ENCODE measurements at regions of chr10 and their contacts with region 1.

Region 1: DNA sequence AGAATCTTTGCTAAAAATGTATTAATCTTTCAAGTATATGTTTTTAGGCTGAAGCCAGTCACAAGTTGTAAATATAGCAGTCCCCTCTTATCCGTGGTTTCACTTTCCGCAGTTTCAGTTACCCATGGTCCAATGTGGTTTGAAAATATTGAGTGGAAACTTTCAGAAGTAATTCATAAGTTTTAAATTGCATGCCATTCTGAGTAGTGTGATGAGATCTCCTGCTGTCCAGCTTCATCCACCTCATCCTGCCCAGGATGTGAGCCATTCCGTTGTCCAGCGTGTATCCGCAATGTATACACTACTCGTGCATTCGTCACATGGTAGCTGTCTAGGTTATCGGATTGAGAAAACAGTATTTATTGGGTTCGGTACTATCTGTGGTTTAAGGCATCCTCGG is 12.2 kb downstream of the PDCD4 start:
- DNase-seq: peak in 1 of 9 experiments; percentile 45
- ATAC-seq: peak; percentile 22
- H3K4me3 ChIP-seq: peak overlapping the region in 1 of 2 experiments; percentile 29
- H3K4me3 Mint-ChIP-seq: peak overlapping the region; percentile 74
- H3K27ac ChIP-seq: peak overlapping the region in 1 of 2 experiments; percentile 58
- H3K27ac Mint-ChIP-seq: peak overlapping the region; percentile 83
- H3K4me1 ChIP-seq: peaks cover 68% of the 10 kb centered on the region
- H3K4me1 Mint-ChIP-seq: peaks cover 76% of the 10 kb centered on the region
- H3K27me3 ChIP-seq: no peaks in the 10 kb centered on the region
- H3K27me3 Mint-ChIP-seq: no peaks in the 10 kb centered on the region
- CTCF ChIP-seq: no peak

Region 2: DNA sequence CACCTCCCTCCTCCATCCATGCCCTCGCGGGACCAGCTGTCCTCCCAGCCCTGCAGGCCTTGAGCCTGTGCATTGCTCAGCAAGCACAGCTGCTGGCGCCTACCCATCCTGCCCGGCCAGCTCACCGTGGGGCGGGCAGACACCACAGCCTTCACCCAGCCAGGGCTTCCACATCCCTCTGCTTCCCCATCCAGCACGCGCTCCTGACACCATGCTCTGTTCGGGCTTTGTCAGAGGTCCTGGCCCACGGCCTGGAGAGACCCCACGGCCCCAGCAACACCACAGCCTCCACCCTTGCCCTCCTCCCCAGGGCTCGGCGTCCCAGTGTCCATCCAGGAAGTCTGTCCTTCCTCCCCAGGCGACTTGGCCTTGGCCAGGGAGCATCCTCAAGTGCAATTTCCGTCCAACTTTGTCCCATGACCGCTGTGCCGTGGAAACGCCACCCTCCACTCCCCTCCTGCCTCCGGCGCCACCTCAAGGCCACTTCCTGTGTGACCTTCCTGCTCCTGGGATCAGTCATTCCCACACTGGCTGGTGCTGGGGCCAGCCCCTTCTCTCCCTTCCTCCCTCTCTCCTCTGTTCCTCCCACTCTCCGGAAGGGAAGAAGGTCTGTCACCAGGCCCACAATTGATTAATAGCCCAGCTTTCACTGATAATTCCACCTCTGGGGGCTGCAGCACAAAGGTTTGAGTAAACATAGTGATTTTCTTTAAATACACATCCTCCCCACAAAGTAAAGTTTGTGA is 507.7 kb before region 1 on chr10:
- CTCF ChIA-PET with region 1: no interaction called
- POLR2A ChIA-PET with region 1: no interaction called
- intact Hi-C with region 1: no loop called
- DNase-seq: no peak
- ATAC-seq: no peak
- H3K4me3 ChIP-seq: no peak overlapping the region
- H3K4me3 Mint-ChIP-seq: no peak overlapping the region
- H3K27ac ChIP-seq: no peak overlapping the region
- H3K27ac Mint-ChIP-seq: no peak overlapping the region
- H3K4me1 ChIP-seq: no peaks in the 10 kb centered on the region
- H3K4me1 Mint-ChIP-seq: no peaks in the 10 kb centered on the region
- H3K27me3 ChIP-seq: no peaks in the 10 kb centered on the region
- H3K27me3 Mint-ChIP-seq: peaks cover 2% of the 10 kb centered on the region
- CTCF ChIP-seq: no peak

Region 3: GRCh38 chr10:110901954-110902819 is 18.3 kb after region 1 on chr10:
- CTCF ChIA-PET with region 1: interaction called, 3 read pairs
- POLR2A ChIA-PET with region 1: interaction called, 5 read pairs
- intact Hi-C with region 1: loop called in 1 of 2 experiments (anchors 2 kb)
- DNase-seq: no peak
- ATAC-seq: peak; percentile 48
- H3K4me3 ChIP-seq: no peak overlapping the region
- H3K4me3 Mint-ChIP-seq: no peak overlapping the region
- H3K27ac ChIP-seq: no peak overlapping the region
- H3K27ac Mint-ChIP-seq: peak overlapping the region; percentile 71
- H3K4me1 ChIP-seq: no peaks in the 10 kb centered on the region
- H3K4me1 Mint-ChIP-seq: peaks cover 31% of the 10 kb centered on the region
- H3K27me3 ChIP-seq: no peaks in the 10 kb centered on the region
- H3K27me3 Mint-ChIP-seq: no peaks in the 10 kb centered on the region
- CTCF ChIP-seq: no peak

Measured in CD8-positive, alpha-beta T cell (primary cell).